ENCODE measurements at regions of chr3 and their contacts with region 1.

Region 1: DNA sequence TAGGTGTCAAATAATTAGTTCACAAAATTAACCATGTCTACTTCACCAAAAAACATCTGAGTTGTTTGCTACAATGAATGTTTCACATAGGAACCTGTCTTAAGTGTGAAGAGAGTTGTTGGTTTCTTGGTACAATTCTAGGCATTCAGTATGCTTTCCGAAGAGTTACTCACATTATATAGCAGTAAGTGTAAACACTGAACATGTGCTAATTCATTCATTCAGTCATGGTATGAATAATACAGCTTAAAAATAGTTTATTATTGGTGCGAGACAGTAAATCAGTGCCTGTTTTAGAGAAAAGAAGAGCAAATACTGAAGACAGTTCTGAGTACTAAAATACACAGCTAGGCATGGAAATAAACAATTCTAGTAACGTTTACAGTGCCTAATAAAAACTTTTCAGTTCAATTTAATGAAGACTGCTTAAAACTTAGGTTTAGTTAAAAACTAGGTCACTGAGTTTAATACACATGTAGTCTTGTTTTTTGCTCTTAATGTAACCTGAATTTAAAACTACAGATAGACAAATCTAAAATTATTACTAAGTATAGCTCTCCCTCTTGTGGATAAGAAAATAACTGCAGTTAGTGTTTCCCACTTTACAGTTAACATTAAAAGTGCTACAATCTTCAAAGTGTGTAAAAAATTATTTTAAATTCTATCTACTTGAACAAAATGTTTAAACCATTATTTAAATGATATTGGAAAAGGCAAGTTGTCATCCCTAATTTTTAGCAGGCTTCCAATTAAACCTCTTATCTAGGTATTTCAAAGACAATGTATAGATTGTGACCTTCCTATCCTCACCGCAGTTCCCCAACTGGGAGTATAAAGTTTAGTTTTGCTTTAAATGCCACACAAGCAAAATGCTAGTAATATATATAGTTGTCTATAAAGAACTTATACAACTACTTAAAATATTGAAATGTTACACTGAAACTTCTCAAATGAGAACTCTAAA is 20.1 kb upstream of the ZCWPW2 start:
- DNase-seq: peak in 6 of 9 donors; percentile 10 to 61 (median 47)
- ATAC-seq: peak; percentile 74
- H3K4me3 ChIP-seq: no peak overlapping the region
- H3K4me3 Mint-ChIP-seq: no peak overlapping the region
- H3K27ac ChIP-seq: no peak overlapping the region
- H3K27ac Mint-ChIP-seq: no peak overlapping the region
- H3K4me1 ChIP-seq: peaks cover 0 to 27% of the 10 kb centered on the region in 2 donors
- H3K4me1 Mint-ChIP-seq: peaks cover 0 to 35% (median 8%) of the 10 kb centered on the region in 7 donors
- H3K27me3 ChIP-seq: no peaks in the 10 kb centered on the region
- H3K27me3 Mint-ChIP-seq: no peaks in the 10 kb centered on the region

Region 2: GRCh38 chr3:27134165-27134796 is 1194.2 kb before region 1 on chr3:
- CTCF ChIA-PET with region 1: no interaction called
- POLR2A ChIA-PET with region 1: no interaction called
- intact Hi-C with region 1: loop called in 1 of 2 experiments (anchors 1 kb)
- DNase-seq: peak; percentile 9 to 56 (median 43)
- ATAC-seq: peak; percentile 83
- H3K4me3 ChIP-seq: no peak overlapping the region
- H3K4me3 Mint-ChIP-seq: no peak overlapping the region
- H3K27ac ChIP-seq: no peak overlapping the region
- H3K27ac Mint-ChIP-seq: no peak overlapping the region
- H3K4me1 ChIP-seq: no peaks in the 10 kb centered on the region
- H3K4me1 Mint-ChIP-seq: no peaks in the 10 kb centered on the region
- H3K27me3 ChIP-seq: peaks cover 0 to 3% of the 10 kb centered on the region in 2 donors
- H3K27me3 Mint-ChIP-seq: peaks cover 0 to 11% (median 0%) of the 10 kb centered on the region in 5 donors

Region 3: GRCh38 chr3:27357665-27358258 is 970.7 kb before region 1 on chr3:
- CTCF ChIA-PET with region 1: no interaction called
- POLR2A ChIA-PET with region 1: no interaction called
- intact Hi-C with region 1: loop called in 1 of 2 experiments (anchors 1 kb)
- DNase-seq: peak in 8 of 9 donors; percentile 19 to 56 (median 41)
- ATAC-seq: peak; percentile 93
- H3K4me3 ChIP-seq: no peak overlapping the region
- H3K4me3 Mint-ChIP-seq: no peak overlapping the region
- H3K27ac ChIP-seq: no peak overlapping the region
- H3K27ac Mint-ChIP-seq: no peak overlapping the region
- H3K4me1 ChIP-seq: peaks cover 13 to 18% of the 10 kb centered on the region in 2 donors
- H3K4me1 Mint-ChIP-seq: peaks cover 0 to 31% (median 25%) of the 10 kb centered on the region in 7 donors
- H3K27me3 ChIP-seq: no peaks in the 10 kb centered on the region
- H3K27me3 Mint-ChIP-seq: peaks cover 0 to 20% (median 0%) of the 10 kb centered on the region in 5 donors

Region 4: DNA sequence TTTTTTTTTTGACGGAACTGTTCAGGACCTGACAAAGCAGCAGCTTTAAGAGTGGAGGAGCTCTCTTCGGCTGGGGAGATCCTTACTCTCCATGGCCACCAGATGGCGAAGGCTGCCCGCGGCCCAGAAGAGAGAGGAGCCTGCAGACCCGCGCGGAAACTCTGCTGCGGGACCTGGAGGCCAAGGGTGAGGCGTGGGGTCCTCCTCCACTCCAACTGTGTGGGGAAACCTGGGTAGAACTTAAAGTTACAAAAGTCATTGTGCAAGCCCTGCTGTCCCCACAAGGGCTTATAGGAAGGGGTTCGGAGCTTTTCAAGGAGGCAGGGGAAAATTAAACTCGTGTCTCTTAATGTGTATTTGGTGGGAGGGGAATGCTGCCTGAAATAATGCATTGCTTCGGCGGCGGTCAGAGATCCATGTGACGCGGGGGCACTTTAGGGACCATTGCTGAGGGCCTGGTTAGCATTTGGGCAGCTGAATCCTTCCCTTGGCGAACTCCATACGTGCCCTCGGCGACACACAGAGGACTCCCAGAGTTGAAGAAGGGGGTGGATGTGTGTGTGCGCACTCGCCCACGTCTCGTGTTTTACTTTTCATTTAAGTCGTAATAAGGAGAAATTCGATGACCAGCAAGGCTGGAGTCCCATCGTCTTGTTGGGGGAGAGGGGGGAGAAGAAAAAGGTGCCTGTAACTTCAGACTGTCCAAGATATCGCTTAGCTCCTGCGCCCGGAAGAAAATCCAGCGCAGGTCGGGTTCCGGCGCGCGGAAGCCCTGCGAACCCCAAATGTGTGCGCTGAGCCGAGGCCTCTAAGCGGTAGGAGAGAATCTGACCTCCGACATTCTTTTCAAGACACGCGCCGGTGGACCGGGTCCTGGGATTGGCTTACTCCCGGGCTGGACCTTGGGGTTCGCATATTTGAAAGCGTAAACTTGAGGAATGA is 616.1 kb before region 1 on chr3:
- CTCF ChIA-PET with region 1: interaction called, 65 read pairs
- POLR2A ChIA-PET with region 1: no interaction called
- intact Hi-C with region 1: loop called (anchors 1 kb)
- DNase-seq: peak; percentile 59 to 82 (median 75)
- ATAC-seq: peak; percentile 96
- H3K4me3 ChIP-seq: peak overlapping the region; percentile 77
- H3K4me3 Mint-ChIP-seq: peak overlapping the region; percentile 91 to 100 (median 96)
- H3K27ac ChIP-seq: no peak overlapping the region
- H3K27ac Mint-ChIP-seq: peak overlapping the region in 7 of 9 donors; percentile 16 to 81 (median 61)
- H3K4me1 ChIP-seq: peaks cover 4 to 20% of the 10 kb centered on the region in 2 donors
- H3K4me1 Mint-ChIP-seq: peaks cover 24 to 36% (median 30%) of the 10 kb centered on the region in 7 donors
- H3K27me3 ChIP-seq: peaks cover 0 to 20% of the 10 kb centered on the region in 2 donors
- H3K27me3 Mint-ChIP-seq: peaks cover 37 to 86% (median 41%) of the 10 kb centered on the region in 5 donors

Region 5: DNA sequence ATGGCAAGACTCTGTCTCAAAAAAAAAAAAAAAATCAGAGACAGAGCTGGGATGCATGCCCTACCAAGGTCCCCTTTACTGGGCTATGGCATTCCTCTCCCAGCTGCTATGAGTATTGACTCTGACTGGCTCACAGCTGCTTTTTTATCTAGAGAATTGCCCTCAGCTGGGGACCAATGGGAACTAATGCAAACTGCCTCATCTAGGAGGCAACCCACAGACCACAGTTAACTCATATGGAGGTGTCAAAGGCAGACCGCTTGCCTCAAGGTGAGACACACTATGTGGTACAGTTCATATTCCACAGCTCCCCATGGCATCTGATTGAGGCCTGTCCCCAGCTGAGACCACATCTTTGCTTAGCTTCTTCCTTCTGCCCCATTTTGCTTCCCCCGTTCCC is 422.8 kb before region 1 on chr3:
- CTCF ChIA-PET with region 1: no interaction called
- POLR2A ChIA-PET with region 1: no interaction called
- intact Hi-C with region 1: loop called in 1 of 2 experiments (anchors 10 kb)
- DNase-seq: no peak
- ATAC-seq: peak; percentile 64
- H3K4me3 ChIP-seq: no peak overlapping the region
- H3K4me3 Mint-ChIP-seq: no peak overlapping the region
- H3K27ac ChIP-seq: no peak overlapping the region
- H3K27ac Mint-ChIP-seq: peak overlapping the region in 1 of 9 donors; percentile 92
- H3K4me1 ChIP-seq: peaks cover 24 to 45% of the 10 kb centered on the region in 2 donors
- H3K4me1 Mint-ChIP-seq: peaks cover 15 to 51% (median 38%) of the 10 kb centered on the region in 7 donors
- H3K27me3 ChIP-seq: no peaks in the 10 kb centered on the region
- H3K27me3 Mint-ChIP-seq: no peaks in the 10 kb centered on the region

Region 6: DNA sequence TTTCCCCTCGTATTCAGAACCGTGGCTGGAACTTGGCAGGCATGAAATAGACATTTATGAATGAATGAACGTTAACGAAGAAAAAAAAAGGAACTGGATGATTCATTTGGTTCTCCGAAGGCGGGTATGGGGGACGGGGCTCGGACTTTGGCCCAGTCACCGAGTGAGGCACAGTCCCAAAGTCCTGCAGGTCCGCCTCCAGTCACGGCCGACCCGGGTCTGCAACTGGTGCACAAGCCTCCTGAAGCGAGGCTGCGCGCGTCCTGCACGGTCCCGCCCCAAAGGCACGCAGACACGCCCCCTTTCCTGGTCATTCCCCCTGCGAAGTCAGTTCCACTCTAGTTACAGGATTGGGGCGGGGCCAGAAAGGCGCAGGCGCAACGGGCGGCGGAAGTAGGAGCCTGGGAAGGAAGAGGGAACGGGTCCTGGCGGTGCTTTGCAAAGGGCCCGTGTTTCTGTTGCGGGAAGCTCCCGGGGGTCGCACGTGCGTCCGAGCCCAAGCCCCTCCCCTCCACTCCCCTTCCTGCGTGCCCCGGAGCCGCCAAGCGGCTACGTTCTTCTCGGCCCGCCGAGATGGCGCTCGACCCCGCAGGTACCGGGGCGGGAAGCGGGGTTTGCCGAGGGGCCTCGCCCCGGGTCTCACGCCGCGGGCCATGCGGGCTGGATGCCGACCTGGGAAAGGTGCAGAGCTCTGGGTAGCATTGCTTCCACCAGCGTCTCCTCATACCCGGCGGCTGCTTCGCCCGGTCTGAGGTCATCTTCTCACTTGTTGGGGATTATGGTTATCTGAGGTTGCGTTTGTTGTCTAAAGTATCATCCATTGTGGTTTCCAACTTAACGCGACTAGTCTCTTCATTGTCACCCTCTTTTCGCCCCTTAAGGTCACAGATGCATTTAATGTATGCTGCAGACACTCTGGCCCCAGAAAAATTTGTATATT is 87.0 kb before region 1 on chr3 and contains the start of gene CMC1:
- CTCF ChIA-PET with region 1: no interaction called
- POLR2A ChIA-PET with region 1: no interaction called
- intact Hi-C with region 1: loop called (anchors 1 to 5 kb)
- DNase-seq: peak; percentile 69 to 93 (median 83)
- ATAC-seq: peak; percentile 95
- H3K4me3 ChIP-seq: peak within 1 kb of the TSS; percentile 71
- H3K4me3 Mint-ChIP-seq: peak within 1 kb of the TSS; percentile 88 to 97 (median 96)
- H3K27ac ChIP-seq: peak within 1 kb of the TSS; percentile 71
- H3K27ac Mint-ChIP-seq: peak within 1 kb of the TSS; percentile 85 to 96 (median 94)
- H3K4me1 ChIP-seq: peaks cover 16 to 40% of the 10 kb centered on the region in 2 donors
- H3K4me1 Mint-ChIP-seq: peaks cover 32 to 77% (median 60%) of the 10 kb centered on the region in 7 donors
- H3K27me3 ChIP-seq: no peaks in the 10 kb centered on the region
- H3K27me3 Mint-ChIP-seq: no peaks in the 10 kb centered on the region
- total RNA-seq, gene CMC1: 11.0 to 25.1 (median 13.9) TPM

Region 7: DNA sequence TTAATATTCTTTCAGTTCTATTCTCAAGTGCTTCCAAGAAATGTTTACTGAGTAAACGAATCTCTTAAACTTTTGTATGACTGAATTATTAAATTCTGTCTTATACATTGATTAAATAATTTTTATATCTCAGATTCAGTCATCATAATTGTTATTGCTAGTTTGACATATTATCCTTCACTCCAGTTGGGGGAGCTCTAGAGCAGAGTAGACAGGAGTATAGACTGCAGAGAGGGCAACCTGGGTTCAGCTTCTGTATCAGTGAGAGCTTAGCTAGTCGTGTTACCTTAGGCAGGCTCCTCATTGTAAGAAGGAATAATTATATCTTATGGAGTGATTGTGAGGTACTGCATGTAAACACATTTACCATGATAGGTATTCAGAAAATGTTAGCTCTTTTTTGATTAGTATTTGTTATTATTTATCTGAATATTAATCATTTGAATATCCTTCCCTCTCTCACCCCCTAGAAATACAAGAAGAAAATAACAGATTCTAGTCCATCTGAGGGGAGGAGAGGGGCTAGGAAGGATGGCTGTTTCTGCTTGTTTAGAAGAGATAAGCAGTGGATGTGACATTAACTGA is 10.9 kb before region 1 on chr3:
- CTCF ChIA-PET with region 1: interaction called, 5 read pairs
- POLR2A ChIA-PET with region 1: no interaction called
- intact Hi-C with region 1: loop called (anchors 1 kb)
- DNase-seq: peak in 7 of 9 donors; percentile 7 to 47 (median 34)
- ATAC-seq: peak; percentile 95
- H3K4me3 ChIP-seq: no peak overlapping the region
- H3K4me3 Mint-ChIP-seq: no peak overlapping the region
- H3K27ac ChIP-seq: no peak overlapping the region
- H3K27ac Mint-ChIP-seq: no peak overlapping the region
- H3K4me1 ChIP-seq: no peaks in the 10 kb centered on the region
- H3K4me1 Mint-ChIP-seq: peaks cover 0 to 19% (median 6%) of the 10 kb centered on the region in 7 donors
- H3K27me3 ChIP-seq: no peaks in the 10 kb centered on the region
- H3K27me3 Mint-ChIP-seq: no peaks in the 10 kb centered on the region

Measured in naive thymus-derived CD4-positive, alpha-beta T cell (primary cell).